Caco-2 (cell line): ENCODE measurements at regions of chr14 and their contacts with region 1.

Region 1: GRCh38 chr14:77067632-77068514 is 30.2 kb upstream of the CIPC start:
- DNase-seq: peak; percentile 65 to 82
- H3K4me3 ChIP-seq: no peak overlapping the region
- H3K4me3 Mint-ChIP-seq: no peak overlapping the region
- H3K27ac Mint-ChIP-seq: no peak overlapping the region
- H3K4me1 ChIP-seq: no peaks in the 10 kb centered on the region
- H3K4me1 Mint-ChIP-seq: no peaks in the 10 kb centered on the region
- H3K27me3 ChIP-seq: no peaks in the 10 kb centered on the region
- H3K27me3 Mint-ChIP-seq: no peaks in the 10 kb centered on the region
- CTCF ChIP-seq: peak; percentile 87 to 94

Region 2: DNA sequence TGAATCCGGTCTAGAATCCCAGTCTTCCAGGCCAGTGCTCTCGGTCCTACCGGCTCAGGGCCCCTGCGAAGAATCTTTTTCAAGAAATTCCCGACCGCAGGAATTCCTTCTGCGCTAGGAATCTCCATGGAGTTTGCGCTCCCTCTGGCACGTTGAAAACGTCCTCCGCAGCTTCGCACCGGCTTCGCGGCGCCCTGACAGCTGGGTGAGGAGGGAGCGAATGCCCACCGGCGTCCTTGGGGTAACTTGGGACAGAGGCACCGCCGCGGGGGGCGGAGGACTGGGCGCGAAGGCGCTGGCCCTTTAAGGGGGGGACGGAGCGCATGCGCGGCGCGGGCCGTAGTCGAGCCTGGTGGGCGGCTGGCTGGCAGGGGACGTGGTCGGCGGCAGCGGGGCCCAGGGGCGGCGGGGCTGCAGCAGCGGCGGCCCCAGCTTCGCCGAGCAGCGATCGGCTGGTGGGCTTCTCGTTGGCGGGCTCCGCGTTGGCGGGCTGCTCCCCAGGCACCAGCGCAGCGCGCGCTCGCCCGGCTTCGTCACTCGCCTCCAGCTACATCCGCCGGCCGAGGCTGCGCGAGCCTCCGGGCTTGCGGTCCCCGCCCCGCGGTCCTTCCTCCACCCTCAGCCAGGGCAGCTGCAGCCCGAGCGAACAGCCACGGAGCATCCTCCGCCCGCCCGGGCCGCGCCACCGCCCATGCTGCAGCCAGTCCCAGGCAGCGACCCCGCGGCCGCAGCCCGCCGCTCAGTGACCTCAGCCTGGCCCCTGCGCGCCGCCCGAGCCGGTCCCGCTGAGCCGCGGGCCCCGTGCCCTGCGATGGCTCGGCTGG is 306.5 kb before region 1 on chr14 and contains the start of gene VASH1:
- CTCF ChIA-PET with region 1: no interaction called
- POLR2A ChIA-PET with region 1: no interaction called
- intact Hi-C with region 1: no loop called
- DNase-seq: peak in 1 of 2 experiments; percentile 58
- H3K4me3 ChIP-seq: peak within 1 kb of the TSS; percentile 54
- H3K4me3 Mint-ChIP-seq: peak within 1 kb of the TSS; percentile 69
- H3K27ac Mint-ChIP-seq: no peak within 1 kb of the TSS
- H3K4me1 ChIP-seq: peaks cover 10% of the 10 kb centered on the region; the same call in 1 of the 2 replicates
- H3K4me1 Mint-ChIP-seq: no peaks in the 10 kb centered on the region
- H3K27me3 ChIP-seq: peaks cover 7% of the 10 kb centered on the region
- H3K27me3 Mint-ChIP-seq: peaks cover 34% of the 10 kb centered on the region
- CTCF ChIP-seq: no peak
- total RNA-seq, gene VASH1: 0.16 and 0.18 TPM in 2 replicates

Region 3: GRCh38 chr14:77053046-77053841 is 14.6 kb before region 1 on chr14:
- CTCF ChIA-PET with region 1: interaction called, 5 read pairs
- POLR2A ChIA-PET with region 1: no interaction called
- intact Hi-C with region 1: loop called (anchors 1 kb)
- DNase-seq: peak; percentile 79 to 84
- H3K4me3 ChIP-seq: no peak overlapping the region
- H3K4me3 Mint-ChIP-seq: no peak overlapping the region
- H3K27ac Mint-ChIP-seq: no peak overlapping the region
- H3K4me1 ChIP-seq: peaks cover 6% of the 10 kb centered on the region; the same call in 1 of the 2 replicates
- H3K4me1 Mint-ChIP-seq: no peaks in the 10 kb centered on the region
- H3K27me3 ChIP-seq: no peaks in the 10 kb centered on the region
- H3K27me3 Mint-ChIP-seq: no peaks in the 10 kb centered on the region
- CTCF ChIP-seq: peak; percentile 93 to 94

Region 4: GRCh38 chr14:77086017-77086736 is 18.3 kb after region 1 on chr14:
- CTCF ChIA-PET with region 1: interaction called, 23 read pairs
- POLR2A ChIA-PET with region 1: no interaction called
- intact Hi-C with region 1: no loop called
- DNase-seq: peak in 1 of 2 experiments; percentile 66
- H3K4me3 ChIP-seq: no peak overlapping the region
- H3K4me3 Mint-ChIP-seq: no peak overlapping the region
- H3K27ac Mint-ChIP-seq: peak overlapping the region; percentile 75
- H3K4me1 ChIP-seq: peaks cover 31% of the 10 kb centered on the region
- H3K4me1 Mint-ChIP-seq: peaks cover 24% of the 10 kb centered on the region
- H3K27me3 ChIP-seq: no peaks in the 10 kb centered on the region
- H3K27me3 Mint-ChIP-seq: no peaks in the 10 kb centered on the region
- CTCF ChIP-seq: no peak

Region 5: DNA sequence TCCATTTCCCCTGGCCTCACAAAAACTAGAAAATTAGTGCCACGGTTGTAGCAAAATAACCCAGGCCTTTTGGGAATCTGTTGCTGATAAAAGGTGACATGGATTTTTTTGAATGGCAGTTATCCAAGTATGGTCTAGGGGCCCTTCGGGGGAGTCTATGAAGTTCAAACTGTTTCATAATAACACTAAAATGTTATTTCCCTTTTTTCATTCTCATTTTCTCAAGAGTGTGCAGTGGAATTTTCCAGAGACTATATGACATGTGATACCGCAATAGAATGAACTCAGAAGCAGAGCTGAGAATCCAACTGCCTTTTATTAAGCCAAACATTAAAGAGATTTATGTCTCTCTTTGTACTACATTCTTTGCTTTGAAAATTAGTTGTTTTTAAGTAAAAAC is 279.9 kb after region 1 on chr14:
- CTCF ChIA-PET with region 1: no interaction called
- POLR2A ChIA-PET with region 1: no interaction called
- intact Hi-C with region 1: no loop called
- DNase-seq: no peak
- H3K4me3 ChIP-seq: no peak overlapping the region
- H3K4me3 Mint-ChIP-seq: no peak overlapping the region
- H3K27ac Mint-ChIP-seq: no peak overlapping the region
- H3K4me1 ChIP-seq: no peaks in the 10 kb centered on the region
- H3K4me1 Mint-ChIP-seq: no peaks in the 10 kb centered on the region
- H3K27me3 ChIP-seq: no peaks in the 10 kb centered on the region
- H3K27me3 Mint-ChIP-seq: no peaks in the 10 kb centered on the region
- CTCF ChIP-seq: no peak